RWPE1 (cell line): ENCODE measurements at regions of chr14 and their contacts with region 1.

Region 1: DNA sequence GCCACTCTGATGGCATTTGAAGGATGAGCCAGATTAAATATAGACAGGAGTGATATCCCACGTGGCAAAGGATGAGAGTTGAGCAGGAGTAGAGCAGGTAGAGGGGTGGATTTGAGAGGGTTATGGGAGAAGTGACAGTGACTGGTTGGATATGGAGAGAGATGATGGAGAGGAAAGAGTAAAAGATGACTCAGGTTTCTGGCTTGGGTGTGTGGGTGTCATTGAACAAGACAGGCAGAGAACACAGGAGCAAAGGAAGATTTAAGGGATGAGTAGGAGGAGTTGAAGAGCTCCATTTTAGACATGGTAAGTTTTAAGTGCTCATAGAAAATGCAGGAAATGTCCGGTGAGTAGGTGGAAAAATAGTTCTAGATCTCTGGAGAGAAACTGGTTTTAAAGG is 136.9 kb downstream of the EGLN3 start:
- DNase-seq: no peak
- H3K27ac ChIP-seq: no peak overlapping the region
- CTCF ChIP-seq: no peak

Region 2: GRCh38 chr14:33972583-33973081 is 158.6 kb after region 1 on chr14:
- CTCF ChIA-PET with region 1: no interaction called
- POLR2A ChIA-PET with region 1: interaction called, 16 read pairs
- DNase-seq: no peak
- H3K27ac ChIP-seq: no peak overlapping the region
- CTCF ChIP-seq: no peak